Mucosa of descending colon (tissue), 3 donors: ENCODE measurements at regions of chr1 and their contacts with region 1.

Region 1: DNA sequence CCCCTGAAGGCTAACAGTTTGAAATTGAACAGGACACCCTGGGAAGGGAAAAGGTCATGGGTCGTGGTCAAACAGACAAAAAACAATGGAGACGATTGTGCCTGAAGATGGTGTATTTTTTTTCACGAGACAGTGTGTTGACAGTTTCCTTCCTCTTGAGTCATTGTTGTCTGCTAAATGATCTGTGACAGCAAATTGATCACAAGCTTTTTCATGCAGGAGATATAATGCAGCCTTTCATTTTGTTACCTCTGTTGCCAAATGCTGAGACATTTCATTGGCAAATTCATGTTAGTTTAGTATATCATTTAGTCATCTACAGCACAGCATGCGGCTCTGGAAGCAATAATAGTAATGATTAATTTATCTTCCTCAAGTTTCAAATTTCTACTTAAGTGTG is 27.7 kb downstream of the UBE2U start:
- DNase-seq: no peak
- ATAC-seq: no peak
- H3K4me3 ChIP-seq: no peak overlapping the region
- H3K4me1 ChIP-seq: no peaks in the 10 kb centered on the region
- CTCF ChIP-seq: no peak

Region 2: DNA sequence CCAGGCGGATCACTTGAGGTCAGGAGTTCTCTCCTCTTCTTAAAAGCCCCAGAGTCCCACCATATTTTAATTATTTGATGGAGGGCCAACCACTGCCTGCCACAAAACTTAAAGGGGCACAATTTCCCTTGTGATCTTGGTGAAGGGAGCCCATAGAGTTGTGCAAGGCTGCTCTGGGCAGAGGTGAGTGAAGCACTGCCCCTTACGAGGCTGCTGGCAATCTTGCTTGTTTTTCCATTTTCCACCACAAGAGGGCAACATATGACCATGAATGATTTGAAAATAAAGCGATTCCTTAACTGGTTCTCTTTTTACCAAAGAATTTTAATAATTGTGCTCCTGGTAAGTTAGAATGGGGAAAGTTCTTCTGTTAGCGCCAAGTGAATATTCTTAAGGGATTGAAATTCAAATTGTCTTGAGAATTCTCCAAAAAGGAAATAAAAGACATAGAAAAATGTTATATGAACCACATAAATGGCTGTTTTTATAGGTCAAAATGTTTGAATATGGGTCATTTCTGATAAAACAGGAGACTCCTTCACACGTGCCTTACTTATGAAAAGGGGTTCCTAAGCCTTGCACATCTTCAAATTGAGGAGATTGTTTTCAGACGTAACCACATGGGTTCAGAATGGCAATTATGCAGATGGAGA is 615.3 kb before region 1 on chr1:
- intact Hi-C with region 1: no loop called
- DNase-seq: peak in 1 of 3 donors; percentile 90
- ATAC-seq: peak; percentile 85
- H3K4me3 ChIP-seq: no peak overlapping the region
- H3K4me1 ChIP-seq: no peaks in the 10 kb centered on the region
- CTCF ChIP-seq: peak; percentile 68

Region 3: GRCh38 chr1:64072089-64072793 is 158.9 kb before region 1 on chr1:
- intact Hi-C with region 1: no loop called
- DNase-seq: no peak
- ATAC-seq: no peak
- H3K4me3 ChIP-seq: no peak overlapping the region
- H3K4me1 ChIP-seq: no peaks in the 10 kb centered on the region
- CTCF ChIP-seq: no peak

Region 4: DNA sequence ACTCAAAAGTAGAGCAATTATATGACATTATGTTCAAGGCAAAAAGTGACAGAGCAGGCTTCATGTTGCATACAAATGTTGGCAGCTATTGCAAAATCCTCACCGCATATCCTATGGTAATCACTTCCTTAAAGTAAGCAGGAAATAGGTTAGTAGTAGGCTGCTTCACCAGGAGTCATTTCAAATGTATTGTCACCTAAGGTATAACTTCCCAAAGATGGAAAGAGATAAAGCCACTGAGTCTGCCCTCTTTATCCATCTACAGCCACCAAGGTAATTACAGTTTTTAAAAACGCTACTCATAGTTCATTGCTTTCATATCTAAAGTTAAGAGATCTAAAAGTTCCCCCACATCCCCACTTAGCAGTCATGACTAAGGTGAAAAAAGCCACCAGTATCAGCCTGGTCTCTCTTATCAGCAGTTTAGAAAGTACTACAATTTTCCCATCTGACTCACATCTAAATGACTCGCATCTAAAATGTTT is 59.3 kb before region 1 on chr1:
- intact Hi-C with region 1: loop called in 1 of 2 experiments (anchors 10 kb)
- DNase-seq: peak in 1 of 3 donors; percentile 22
- ATAC-seq: peak; percentile 88
- H3K4me3 ChIP-seq: no peak overlapping the region
- H3K4me1 ChIP-seq: peaks cover 7% of the 10 kb centered on the region
- CTCF ChIP-seq: no peak